ENCODE measurements at regions of chr3 and their contacts with region 1.

Region 1: GRCh38 chr3:138186803-138187295 is 252 bp upstream of the ARMC8 start:
- DNase-seq: peak; percentile 97
- CTCF ChIP-seq: no peak

Region 2: DNA sequence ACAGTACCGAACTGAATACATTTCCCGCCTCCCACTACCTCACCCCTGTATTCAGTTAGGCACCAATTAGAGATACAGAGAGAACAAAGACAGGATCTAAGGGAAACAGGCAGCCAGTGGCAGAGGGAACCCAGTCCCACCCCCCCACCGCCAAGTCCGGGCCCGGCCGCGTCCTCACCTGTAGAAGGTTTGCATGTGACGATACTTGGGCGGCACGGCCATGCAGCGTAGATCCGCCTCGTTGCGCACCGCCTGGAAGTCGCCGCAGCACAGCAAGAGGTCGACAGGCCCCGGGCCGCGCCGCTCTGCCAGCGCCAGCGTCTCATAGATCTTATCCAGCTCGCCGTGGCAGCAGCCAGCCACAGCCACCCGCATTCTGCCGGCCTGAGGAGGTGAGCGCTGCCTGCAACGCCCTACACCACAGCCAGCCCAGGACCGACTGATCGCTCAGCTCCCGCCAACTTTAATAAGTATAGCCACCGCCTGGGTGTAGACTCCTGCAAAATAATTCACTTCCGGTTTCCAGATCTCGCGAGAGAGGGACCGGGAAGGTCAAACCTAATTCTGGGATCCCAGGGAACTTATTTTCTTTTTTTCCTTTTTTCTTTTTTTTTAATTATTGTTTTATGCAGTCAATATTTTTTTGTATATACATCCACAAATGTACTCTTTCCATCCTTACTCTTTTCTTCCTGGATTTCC is 12.3 kb before region 1 on chr3 and contains the start of gene DBR1:
- CTCF ChIA-PET with region 1: interaction called, 18 read pairs
- POLR2A ChIA-PET with region 1: interaction called, 11 read pairs
- DNase-seq: peak; percentile 82
- CTCF ChIP-seq: no peak

Measured in GM10248 (cell line).